Breast epithelium (tissue), 4 donors: ENCODE measurements at regions of chr2 and their contacts with region 1.

Region 1: DNA sequence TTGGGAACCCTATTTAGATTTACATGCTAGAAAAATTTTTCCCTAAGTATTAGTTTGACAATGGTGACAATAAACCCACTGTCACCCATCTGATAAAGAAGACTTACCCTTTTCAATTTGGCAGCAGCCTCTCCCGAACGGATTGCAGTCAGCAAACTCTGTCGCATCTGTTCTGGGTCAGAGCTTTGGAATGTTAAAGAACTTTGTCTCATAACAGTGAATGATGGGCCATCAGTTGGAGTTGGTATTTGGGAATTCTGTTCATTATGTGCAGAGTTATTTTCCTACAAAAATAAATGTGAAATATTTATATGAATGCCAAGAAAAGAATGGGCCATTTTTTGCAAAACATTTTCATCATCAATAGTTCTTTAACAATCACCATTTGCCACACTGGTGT is 70.8 kb upstream of the GRB14 start:
- DNase-seq: no peak
- H3K4me3 ChIP-seq: no peak overlapping the region
- H3K27ac ChIP-seq: no peak overlapping the region
- H3K4me1 ChIP-seq: no peaks in the 10 kb centered on the region
- H3K27me3 ChIP-seq: no peaks in the 10 kb centered on the region
- CTCF ChIP-seq: no peak
- POLR2A ChIP-seq: no peak

Region 2: DNA sequence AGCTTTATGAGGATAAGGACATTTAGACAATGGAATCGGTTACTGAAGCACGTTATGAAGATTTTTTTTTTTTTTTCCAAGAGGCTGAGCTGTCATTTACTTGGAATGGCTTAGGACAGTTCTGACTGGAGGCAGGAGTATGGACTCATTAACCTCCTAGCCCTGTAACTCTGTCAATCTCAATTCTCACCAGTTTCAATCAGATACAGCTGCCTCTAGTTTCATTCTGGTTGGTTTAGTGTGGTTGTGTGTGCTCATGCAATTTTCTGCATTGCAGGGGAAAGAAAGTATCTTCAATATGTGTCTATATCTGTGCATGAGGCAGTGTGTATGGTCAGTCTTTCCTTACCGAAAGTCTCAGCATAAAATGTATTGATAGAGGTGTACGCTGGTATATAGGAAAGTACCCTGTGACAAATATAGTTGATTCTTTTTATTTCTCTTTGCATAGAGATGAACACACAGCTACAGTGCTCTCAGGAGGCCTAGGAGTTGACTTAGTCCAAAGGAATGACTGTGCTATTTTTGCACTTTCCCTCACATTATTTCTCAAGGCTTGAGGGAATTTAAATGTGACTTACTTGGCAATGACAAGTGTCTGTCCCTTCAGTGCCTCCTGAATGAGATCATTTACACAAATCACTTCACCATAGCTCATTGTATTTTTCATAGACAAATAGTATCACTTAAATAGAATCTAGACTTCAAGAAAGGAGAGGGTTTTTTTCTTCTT is 20.3 kb before region 1 on chr2:
- intact Hi-C with region 1: loop called (anchors 1 kb)
- DNase-seq: no peak
- H3K4me3 ChIP-seq: no peak overlapping the region
- H3K27ac ChIP-seq: no peak overlapping the region
- H3K4me1 ChIP-seq: no peaks in the 10 kb centered on the region
- H3K27me3 ChIP-seq: no peaks in the 10 kb centered on the region
- CTCF ChIP-seq: no peak
- POLR2A ChIP-seq: no peak

Region 3: GRCh38 chr2:165256618-165257017 is 564.5 kb after region 1 on chr2:
- intact Hi-C with region 1: no loop called
- DNase-seq: no peak
- H3K4me3 ChIP-seq: no peak overlapping the region
- H3K27ac ChIP-seq: no peak overlapping the region
- H3K4me1 ChIP-seq: no peaks in the 10 kb centered on the region
- H3K27me3 ChIP-seq: no peaks in the 10 kb centered on the region
- CTCF ChIP-seq: no peak
- POLR2A ChIP-seq: no peak

Region 4: DNA sequence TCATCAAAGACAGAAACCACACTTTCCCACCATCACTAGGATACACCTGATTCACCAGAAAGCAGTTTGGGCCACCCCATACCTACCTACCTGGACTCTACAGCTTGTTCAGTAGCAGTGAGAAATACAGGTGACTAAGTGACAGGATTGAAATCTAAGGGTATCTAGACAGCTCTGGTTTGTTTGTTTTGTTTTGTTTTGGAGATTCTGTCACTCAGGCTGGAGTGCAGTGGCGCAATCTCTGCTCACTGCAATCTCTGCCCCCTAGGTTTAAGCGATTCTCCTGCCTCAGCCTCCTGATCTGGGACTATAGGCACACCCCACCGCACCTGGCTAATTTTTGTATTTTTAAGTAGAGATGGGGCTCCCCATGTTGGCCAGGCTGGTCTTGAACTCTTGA is 1258.3 kb after region 1 on chr2:
- intact Hi-C with region 1: no loop called
- DNase-seq: no peak
- H3K4me3 ChIP-seq: no peak overlapping the region
- H3K27ac ChIP-seq: no peak overlapping the region
- H3K4me1 ChIP-seq: peaks cover 0 to 5% of the 10 kb centered on the region in 2 donors
- H3K27me3 ChIP-seq: no peaks in the 10 kb centered on the region
- CTCF ChIP-seq: no peak
- POLR2A ChIP-seq: no peak